ENCODE measurements at regions of chr18 and their contacts with region 1.

Region 1: DNA sequence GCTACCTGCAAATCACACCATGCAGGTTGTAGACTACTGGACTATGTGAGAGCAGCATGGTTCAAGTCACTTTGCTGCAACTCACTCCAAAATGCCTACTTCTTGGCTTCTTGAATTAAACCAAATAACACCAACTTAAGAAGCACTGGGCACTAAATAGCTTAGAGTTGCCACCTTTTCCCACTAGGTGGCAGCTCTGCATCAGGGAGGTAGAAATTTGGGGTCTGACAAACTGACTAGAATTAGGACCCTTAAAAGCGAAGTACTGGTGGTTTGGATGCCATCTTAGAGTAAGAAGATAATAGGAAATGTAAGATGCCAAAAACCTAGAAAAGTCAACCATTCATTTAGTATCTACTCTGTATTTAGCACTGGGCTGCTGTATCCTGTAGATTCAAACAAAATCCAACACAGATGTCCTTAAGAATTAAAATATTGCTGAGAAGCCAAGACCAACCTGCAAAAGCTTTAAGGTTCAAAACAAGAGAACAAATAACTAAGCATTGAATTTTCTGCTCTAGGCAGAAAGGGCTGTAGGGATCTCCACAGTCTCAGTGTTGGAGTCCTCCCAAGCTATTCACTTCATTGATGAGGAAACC is 65.5 kb downstream of the CCBE1 start:
- DNase-seq: no peak
- H3K4me3 ChIP-seq: no peak overlapping the region
- H3K27ac ChIP-seq: no peak overlapping the region
- H3K4me1 ChIP-seq: no peaks in the 10 kb centered on the region
- H3K27me3 ChIP-seq: no peaks in the 10 kb centered on the region
- CTCF ChIP-seq: peak; percentile 39 to 64 (median 52)
- EP300 ChIP-seq: no peak
- POLR2A ChIP-seq: no peak

Region 2: DNA sequence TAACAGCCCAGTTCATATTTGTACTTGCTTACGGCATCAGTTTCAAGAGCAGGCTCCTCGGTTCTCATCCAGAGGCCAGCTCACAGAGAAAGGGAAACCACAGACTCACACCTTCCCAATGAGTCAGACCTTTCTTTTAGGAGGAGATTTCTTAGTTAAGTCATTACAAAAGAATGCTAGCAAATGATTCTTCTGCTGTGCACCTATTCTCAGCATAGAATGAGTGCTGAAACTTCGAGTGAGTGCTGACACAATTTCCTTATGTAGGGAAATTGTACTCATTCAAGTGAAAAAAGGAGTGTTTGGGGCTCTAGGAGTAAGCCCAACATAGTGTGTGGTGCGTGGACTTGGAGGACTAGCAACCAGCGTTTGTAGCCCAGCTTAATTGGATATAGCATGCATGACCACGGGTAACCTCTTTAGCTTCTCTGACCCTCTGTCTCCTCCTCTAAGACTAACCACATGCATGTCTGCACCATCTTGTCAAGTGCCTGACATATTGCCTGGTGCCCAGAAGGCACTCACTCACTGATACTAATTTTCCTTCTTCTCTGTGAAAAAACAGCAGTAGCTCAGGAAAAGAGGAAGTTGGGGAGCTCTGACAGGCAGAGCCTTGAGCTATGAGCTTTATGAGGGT is 1089.8 kb before region 1 on chr18:
- intact Hi-C with region 1: no loop called
- DNase-seq: no peak
- H3K4me3 ChIP-seq: no peak overlapping the region
- H3K27ac ChIP-seq: no peak overlapping the region
- H3K4me1 ChIP-seq: peaks cover 0 to 16% (median 11%) of the 10 kb centered on the region in 4 donors
- H3K27me3 ChIP-seq: no peaks in the 10 kb centered on the region
- CTCF ChIP-seq: no peak
- EP300 ChIP-seq: no peak
- POLR2A ChIP-seq: no peak

Region 3: DNA sequence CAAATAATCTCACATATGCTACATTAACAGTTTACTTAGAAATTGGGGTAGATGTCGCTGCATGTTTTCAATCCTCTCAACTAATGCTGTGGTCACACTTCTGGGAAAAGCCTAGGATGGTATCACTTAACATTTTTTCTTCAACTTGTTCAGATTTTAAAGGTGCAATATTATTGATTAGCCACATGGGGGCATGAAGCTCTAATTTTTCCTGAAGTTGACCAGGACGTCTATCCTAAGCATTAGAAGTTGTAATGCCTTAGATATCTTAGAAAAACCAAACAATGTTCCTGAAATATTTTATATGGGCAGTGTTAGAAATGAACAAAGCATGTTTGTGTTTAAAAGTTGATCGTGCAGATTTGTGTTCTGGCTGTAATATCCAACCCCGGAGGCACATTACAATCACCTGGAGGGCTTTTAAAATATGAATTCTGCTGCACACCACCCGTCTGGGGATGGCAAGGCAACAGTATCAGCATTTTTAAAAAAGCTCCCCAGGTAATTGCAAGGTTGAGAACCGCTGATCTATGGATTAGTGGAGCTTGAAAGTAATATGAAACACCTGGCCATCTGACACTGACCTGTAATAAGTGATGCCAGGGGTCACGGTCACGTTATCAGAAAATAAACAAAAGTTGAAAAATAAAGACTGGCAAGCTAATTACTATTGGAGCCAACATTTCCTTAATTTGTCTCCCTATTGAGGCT is 172.2 kb before region 1 on chr18:
- intact Hi-C with region 1: loop called (anchors 10 kb)
- DNase-seq: no peak
- H3K4me3 ChIP-seq: no peak overlapping the region
- H3K27ac ChIP-seq: no peak overlapping the region
- H3K4me1 ChIP-seq: peaks cover 4 to 10% (median 9%) of the 10 kb centered on the region in 4 donors
- H3K27me3 ChIP-seq: no peaks in the 10 kb centered on the region
- CTCF ChIP-seq: peak; percentile 54 to 64 (median 58)
- EP300 ChIP-seq: no peak
- POLR2A ChIP-seq: no peak

Region 4: DNA sequence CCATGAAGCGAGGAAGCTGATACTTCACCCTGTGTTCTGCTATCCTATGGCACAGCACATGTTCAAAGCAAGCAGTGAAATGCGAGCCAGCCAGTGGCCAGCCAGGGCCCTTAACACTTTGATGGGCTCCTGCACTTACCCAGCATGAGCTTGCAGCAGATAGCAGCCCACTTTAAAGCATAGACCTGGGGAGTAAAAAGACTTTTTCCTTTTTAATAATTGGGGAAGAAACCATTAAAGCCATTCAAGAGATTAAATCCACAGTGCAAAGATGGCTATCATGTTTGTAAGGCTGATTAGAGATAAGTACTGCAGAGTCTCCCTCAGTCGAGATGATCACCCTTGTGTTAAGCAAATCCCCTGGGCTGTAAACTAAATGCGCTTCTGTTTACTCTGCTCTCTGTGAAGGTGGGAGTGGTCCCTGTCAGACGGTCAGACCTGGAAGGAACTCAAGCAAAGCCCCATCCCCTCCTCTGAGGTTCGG is 49.9 kb after region 1 on chr18:
- intact Hi-C with region 1: no loop called
- DNase-seq: no peak
- H3K4me3 ChIP-seq: no peak overlapping the region
- H3K27ac ChIP-seq: no peak overlapping the region
- H3K4me1 ChIP-seq: peaks cover 8 to 19% (median 18%) of the 10 kb centered on the region in 4 donors
- H3K27me3 ChIP-seq: no peaks in the 10 kb centered on the region
- CTCF ChIP-seq: no peak
- EP300 ChIP-seq: no peak
- POLR2A ChIP-seq: no peak

Region 5: DNA sequence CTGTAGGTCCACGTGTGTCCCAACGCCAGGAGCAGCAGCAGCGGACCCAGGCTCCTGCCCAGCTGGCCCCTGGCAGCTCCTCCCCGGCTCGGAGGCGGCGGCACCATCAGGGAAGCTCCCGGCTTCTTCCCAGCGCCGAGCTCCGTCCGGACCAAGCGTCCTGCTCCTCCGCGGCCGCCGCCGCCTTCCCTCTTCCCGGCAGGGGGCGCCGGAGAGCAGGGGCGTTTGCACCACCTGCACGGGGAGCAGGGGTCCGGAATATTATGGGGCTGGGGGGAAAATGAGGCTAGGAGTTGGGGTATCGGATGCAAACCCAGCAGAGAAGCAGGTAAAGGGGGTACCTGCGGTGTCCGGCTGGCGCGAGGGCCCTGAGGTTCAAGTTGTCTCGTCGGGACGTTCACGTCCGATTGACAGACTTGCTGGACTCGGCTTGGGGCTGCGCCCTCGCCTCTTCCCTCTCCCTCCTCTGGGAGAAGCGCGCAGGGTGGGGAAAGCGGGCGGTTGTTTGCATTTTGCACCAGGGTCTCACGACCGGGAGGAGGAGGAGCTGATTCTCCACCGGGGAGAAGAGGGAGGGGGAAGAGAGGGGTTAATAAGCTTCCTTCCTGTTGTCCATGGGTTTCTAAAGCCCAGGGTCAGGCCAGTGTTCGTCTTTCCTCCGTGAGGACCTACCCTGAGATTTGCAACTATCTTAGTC is 65.7 kb after region 1 on chr18 and contains the start of gene CCBE1:
- intact Hi-C with region 1: loop called (anchors 10 kb)
- DNase-seq: no peak
- H3K4me3 ChIP-seq: peak within 1 kb of the TSS; percentile 54 to 67 (median 60)
- H3K27ac ChIP-seq: peak within 1 kb of the TSS in 1 of 4 donors; percentile 28
- H3K4me1 ChIP-seq: peaks cover 11 to 46% (median 33%) of the 10 kb centered on the region in 4 donors
- H3K27me3 ChIP-seq: peaks cover 0 to 26% (median 8%) of the 10 kb centered on the region in 4 donors
- CTCF ChIP-seq: peak; percentile 42 to 85 (median 71)
- EP300 ChIP-seq: no peak
- POLR2A ChIP-seq: no peak
- total RNA-seq, gene CCBE1: 1.6 to 11.1 (median 2.7) TPM